PC-9 (cell line): ENCODE measurements at regions of chr20 and their contacts with region 1.

Region 1: DNA sequence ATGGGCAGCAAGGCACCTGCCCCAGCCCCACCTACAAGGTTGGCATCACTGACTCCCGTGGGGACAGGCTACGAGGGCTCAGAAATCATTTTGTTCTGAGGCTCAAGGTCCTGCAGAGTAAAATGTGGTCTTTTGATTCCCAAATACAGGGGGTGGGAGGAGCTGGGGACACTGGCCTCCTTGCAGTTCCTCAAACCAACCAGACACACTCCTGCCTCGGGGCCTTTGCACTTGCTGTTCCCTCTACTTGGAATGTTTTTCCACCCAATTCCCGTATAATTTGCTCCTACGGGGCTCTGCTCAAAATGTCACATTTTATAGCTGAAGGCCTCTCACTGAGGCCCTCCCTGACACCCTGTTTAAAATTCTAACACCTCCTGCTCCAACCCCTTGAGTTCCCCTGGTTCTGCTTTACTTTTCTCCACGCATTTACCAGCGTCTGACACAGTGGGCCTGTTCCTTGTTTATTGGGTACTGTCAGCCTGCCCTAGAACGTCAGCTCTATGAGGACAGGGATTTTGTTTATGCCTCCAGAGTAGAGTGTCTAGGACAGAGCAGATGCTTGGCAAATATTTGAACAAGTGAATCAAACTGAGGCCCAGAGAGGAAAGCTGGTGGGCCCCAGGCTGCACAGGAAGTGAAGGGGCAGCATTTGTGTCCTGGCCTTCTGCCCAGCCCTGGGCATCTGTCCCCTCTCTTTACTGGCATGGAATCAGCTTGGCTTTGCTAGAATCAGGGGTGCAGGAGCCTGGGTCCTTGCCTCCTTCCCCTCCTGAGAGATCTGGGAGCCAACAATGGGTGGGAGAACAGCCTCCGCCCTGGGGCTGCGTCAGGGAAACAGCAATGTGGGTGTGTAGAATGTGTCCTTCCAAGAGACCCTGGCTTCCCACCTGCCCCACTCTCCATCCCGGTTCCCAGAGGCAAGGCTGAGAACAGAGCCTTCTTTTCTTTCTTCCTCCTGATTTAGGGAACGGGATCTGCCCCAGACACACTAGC is 18.5 kb downstream of the NOL4L start:
- DNase-seq: no peak
- H3K4me3 ChIP-seq: no peak overlapping the region
- H3K27ac ChIP-seq: no peak overlapping the region
- H3K4me1 ChIP-seq: peaks cover 47% of the 10 kb centered on the region
- H3K27me3 ChIP-seq: no peaks in the 10 kb centered on the region
- CTCF ChIP-seq: no peak

Region 2: GRCh38 chr20:32040142-32041022 is 526.3 kb before region 1 on chr20:
- CTCF ChIA-PET with region 1: no interaction called
- POLR2A ChIA-PET with region 1: no interaction called
- intact Hi-C with region 1: no loop called
- DNase-seq: no peak
- H3K4me3 ChIP-seq: no peak overlapping the region
- H3K27ac ChIP-seq: no peak overlapping the region
- H3K4me1 ChIP-seq: no peaks in the 10 kb centered on the region
- H3K27me3 ChIP-seq: peaks cover 60% of the 10 kb centered on the region
- CTCF ChIP-seq: no peak

Region 3: DNA sequence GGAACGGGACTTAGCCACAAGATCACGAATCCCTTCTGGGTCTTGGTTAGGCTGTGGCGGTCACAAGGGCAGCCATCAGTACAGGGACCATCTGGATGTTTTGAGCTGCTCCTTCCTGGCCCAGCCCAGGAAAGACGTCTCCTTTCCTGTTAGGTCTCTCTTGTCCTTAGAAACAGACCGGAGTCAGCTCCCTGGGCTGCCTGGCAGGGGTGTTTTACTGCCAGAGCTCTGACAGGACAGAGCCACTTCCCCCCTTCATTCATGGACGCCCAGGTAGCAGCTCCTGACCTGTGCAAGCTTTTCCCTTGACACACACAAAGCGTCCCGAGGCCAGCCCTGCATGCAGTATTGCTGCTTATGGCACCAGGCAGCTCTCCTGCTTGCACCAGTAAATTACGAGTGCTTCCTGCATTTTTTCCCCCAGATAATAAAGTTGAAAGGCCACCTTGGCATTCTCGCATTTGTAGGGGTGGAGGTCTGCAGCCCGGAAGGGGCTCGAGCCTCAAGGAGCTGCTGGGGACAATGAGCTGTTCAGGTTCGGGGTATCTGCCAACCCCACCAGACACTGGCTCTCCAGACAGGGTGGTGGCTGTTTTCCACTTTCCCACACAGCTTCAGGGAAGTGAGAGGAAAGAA is 69.0 kb before region 1 on chr20:
- CTCF ChIA-PET with region 1: no interaction called
- POLR2A ChIA-PET with region 1: no interaction called
- intact Hi-C with region 1: no loop called
- DNase-seq: no peak
- H3K4me3 ChIP-seq: no peak overlapping the region
- H3K27ac ChIP-seq: no peak overlapping the region
- H3K4me1 ChIP-seq: no peaks in the 10 kb centered on the region
- H3K27me3 ChIP-seq: no peaks in the 10 kb centered on the region
- CTCF ChIP-seq: no peak

Region 4: DNA sequence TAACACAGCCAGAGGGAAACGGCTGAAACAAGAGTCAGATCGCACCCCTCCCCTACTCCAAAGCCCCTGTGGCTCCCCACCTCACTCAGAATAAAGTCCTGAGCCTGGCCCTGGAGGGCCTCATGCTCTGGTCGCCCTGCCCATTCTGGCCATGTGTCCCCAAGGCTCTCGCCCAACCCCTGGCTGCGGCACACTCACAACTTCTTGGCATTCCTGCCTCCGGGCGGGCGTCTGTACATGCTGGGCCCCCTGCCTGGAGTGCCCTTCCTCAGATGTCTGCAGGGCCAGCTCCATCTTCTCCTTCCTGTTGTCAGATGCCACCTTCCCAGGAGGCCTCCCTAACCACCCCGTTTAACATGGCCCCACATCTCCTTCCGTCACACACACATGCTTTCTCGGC is 35.6 kb after region 1 on chr20:
- CTCF ChIA-PET with region 1: no interaction called
- POLR2A ChIA-PET with region 1: interaction called, 10 read pairs
- intact Hi-C with region 1: no loop called
- DNase-seq: no peak
- H3K4me3 ChIP-seq: no peak overlapping the region
- H3K27ac ChIP-seq: no peak overlapping the region
- H3K4me1 ChIP-seq: peaks cover 8% of the 10 kb centered on the region; the same call in 1 of the 2 replicates
- H3K27me3 ChIP-seq: no peaks in the 10 kb centered on the region
- CTCF ChIP-seq: no peak